Cardiac septum (tissue), 1 donor: ENCODE measurements at regions of chr14 and their contacts with region 1.

Region 1: DNA sequence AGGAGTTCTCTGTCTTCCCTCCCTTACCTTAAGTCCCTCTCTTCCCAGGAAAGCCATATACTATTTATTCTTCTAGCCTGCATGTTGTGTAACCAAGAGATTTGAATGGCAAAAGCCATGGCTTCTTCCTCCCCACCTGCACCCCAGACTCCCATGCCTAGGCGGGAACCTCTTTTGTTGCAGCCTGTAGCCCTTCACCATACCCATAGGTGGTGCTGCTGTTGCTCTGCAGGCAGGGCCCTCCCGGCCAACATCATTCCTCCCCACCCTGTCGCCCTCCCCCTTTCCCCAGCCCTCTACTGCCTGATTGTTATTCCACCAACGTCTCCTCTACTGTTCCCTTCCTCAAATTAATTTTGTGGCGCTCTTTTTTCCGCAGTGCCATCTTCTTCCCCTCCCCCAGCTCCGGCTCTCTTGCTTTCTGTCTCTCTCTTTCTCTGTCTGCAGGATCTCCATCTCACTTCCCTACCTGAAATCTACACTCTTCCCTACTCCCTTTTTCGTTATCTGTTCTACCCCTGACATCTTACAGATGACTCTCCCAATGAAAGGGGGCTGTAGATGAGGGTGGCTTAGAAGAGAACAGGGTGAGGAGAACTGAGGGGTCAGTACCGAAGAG is 13.8 kb downstream of the NGDN start:
- DNase-seq: no peak

Region 2: GRCh38 chr14:23454445-23454856 is 28.9 kb before region 1 on chr14:
- intact Hi-C with region 1: no loop called
- DNase-seq: no peak

Region 3: GRCh38 chr14:23539248-23540140 is 56.1 kb after region 1 on chr14:
- intact Hi-C with region 1: loop called (anchors 10 kb)
- DNase-seq: no peak

Region 4: GRCh38 chr14:23613242-23614070 is 130.1 kb after region 1 on chr14:
- intact Hi-C with region 1: no loop called
- DNase-seq: no peak